ENCODE measurements at regions of chr7 and their contacts with region 1.

Region 1: GRCh38 chr7:127858091-127858914 is 172.9 kb downstream of the LRRC4 start:
- DNase-seq: no peak
- ATAC-seq: no peak
- H3K4me3 Mint-ChIP-seq: no peak overlapping the region
- H3K27ac Mint-ChIP-seq: no peak overlapping the region
- H3K4me1 Mint-ChIP-seq: peaks cover 58% of the 10 kb centered on the region
- H3K27me3 Mint-ChIP-seq: no peaks in the 10 kb centered on the region

Region 2: DNA sequence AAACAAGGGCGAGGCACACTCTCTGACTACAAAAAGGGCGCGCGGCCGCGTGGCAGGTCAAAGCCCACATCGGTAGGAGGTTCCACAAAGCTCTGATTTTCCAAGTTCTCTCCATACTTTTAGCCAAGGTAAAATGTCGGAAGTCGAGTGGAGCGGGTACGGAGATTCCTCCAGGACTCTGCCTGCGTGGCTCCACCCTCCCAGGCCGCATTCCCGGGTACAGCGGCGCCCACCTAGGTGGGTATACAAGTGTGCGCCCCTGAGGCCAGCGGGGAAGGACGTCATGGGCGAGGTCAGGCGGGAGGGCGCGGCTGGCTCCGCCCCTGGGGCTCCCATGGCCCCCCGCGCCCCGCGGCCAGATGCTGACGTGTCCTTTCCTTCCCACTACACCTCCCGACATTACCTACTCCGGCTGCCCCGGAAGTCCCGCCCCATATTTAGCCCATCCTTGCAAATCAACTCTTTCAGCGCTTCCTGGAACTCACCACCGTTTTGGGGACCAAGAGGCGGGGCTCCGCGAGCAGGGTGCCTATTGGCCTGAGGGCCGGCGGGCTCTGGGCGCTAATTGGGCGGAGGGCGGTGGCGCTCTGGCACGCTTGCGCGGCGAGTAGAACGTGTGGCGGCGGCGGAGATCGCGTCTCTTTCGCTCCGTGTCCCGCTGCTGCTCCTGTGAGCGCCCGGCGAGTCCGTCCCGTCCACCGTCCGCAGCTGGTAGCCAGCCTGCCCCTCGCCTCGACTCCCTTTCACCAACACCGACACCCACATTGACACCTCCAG is 206.6 kb before region 1 on chr7 and contains the start of gene SND1:
- CTCF ChIA-PET with region 1: no interaction called
- POLR2A ChIA-PET with region 1: no interaction called
- intact Hi-C with region 1: loop called (anchors 5 to 10 kb)
- DNase-seq: peak; percentile 99
- ATAC-seq: peak; percentile 94
- H3K4me3 Mint-ChIP-seq: no peak within 1 kb of the TSS
- H3K27ac Mint-ChIP-seq: peak within 1 kb of the TSS; percentile 99
- H3K4me1 Mint-ChIP-seq: peaks cover 37% of the 10 kb centered on the region
- H3K27me3 Mint-ChIP-seq: no peaks in the 10 kb centered on the region
- total RNA-seq, gene SND1: 193 to 214 TPM

Region 3: DNA sequence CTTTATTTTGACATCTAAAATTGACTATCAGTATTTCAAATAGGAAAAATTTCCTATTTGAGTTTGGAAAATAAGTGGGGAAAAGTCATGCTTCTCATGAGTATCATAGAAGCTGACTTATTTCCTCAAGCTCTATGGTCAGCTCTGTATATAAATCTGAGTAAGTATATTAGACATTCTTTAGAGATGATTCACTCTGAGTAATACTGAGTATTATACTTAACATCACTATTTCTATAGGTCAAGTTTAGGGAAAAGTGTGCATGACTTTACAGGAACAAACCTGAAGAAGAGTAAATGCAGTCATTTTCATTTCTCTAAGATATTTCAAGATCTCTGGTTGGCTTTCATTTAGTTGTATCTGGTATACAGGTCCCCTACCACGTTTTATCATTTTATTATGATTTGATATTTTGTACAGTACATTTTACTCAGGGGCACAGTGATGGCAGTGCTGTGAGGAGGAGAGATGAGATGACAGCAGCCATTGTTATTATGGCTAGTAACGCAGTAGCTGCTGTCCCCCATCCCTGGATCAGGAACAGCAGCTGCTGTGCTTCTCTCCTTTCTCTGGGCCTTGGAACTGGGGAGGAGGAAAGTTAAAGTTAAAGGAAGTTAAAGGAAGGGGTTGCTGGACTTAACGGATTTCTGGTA is 191.2 kb before region 1 on chr7:
- CTCF ChIA-PET with region 1: no interaction called
- POLR2A ChIA-PET with region 1: no interaction called
- intact Hi-C with region 1: loop called in 1 of 2 experiments (anchors 1 kb)
- DNase-seq: no peak
- ATAC-seq: peak; percentile 84
- H3K4me3 Mint-ChIP-seq: peak overlapping the region; percentile 28
- H3K27ac Mint-ChIP-seq: peak overlapping the region; percentile 93
- H3K4me1 Mint-ChIP-seq: peaks cover 54% of the 10 kb centered on the region
- H3K27me3 Mint-ChIP-seq: no peaks in the 10 kb centered on the region

Region 4: GRCh38 chr7:127745445-127745844 is 112.9 kb before region 1 on chr7:
- CTCF ChIA-PET with region 1: no interaction called
- POLR2A ChIA-PET with region 1: no interaction called
- intact Hi-C with region 1: loop called in 1 of 2 experiments (anchors 2 kb)
- DNase-seq: peak; percentile 7
- ATAC-seq: peak; percentile 95
- H3K4me3 Mint-ChIP-seq: no peak overlapping the region
- H3K27ac Mint-ChIP-seq: no peak overlapping the region
- H3K4me1 Mint-ChIP-seq: peaks cover 53% of the 10 kb centered on the region
- H3K27me3 Mint-ChIP-seq: no peaks in the 10 kb centered on the region

Region 5: DNA sequence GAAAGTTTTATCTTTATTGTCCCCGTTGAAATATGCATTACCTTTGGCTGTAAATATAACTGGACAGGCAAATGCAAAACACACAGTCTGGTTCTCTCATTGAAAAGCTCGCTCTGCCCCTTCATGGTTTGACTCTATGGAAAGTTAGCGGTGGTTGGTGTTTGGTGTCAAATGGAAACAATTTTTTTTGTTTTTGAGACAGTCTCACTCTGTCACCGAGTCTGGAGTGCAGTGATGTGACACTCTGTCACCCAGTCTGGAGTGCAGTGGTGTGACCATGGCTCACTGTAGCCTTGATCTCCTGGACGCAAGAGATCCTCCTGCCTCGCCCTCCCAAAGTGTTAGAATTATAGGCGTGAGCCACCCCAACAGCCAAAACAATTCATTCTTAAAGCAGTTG is 23.3 kb after region 1 on chr7:
- CTCF ChIA-PET with region 1: no interaction called
- POLR2A ChIA-PET with region 1: no interaction called
- intact Hi-C with region 1: loop called in 1 of 2 experiments (anchors 2 kb)
- DNase-seq: no peak
- ATAC-seq: peak; percentile 70
- H3K4me3 Mint-ChIP-seq: no peak overlapping the region
- H3K27ac Mint-ChIP-seq: peak overlapping the region; percentile 33
- H3K4me1 Mint-ChIP-seq: peaks cover 16% of the 10 kb centered on the region
- H3K27me3 Mint-ChIP-seq: no peaks in the 10 kb centered on the region

Region 6: GRCh38 chr7:127897704-127898454 is 39.6 kb after region 1 on chr7:
- CTCF ChIA-PET with region 1: interaction called, 7 read pairs
- POLR2A ChIA-PET with region 1: no interaction called
- intact Hi-C with region 1: loop called (anchors 1 kb)
- DNase-seq: peak; percentile 58
- ATAC-seq: peak; percentile 89
- H3K4me3 Mint-ChIP-seq: no peak overlapping the region
- H3K27ac Mint-ChIP-seq: no peak overlapping the region
- H3K4me1 Mint-ChIP-seq: peaks cover 12% of the 10 kb centered on the region
- H3K27me3 Mint-ChIP-seq: no peaks in the 10 kb centered on the region